H1 (cell line): ENCODE measurements at regions of chr22 and their contacts with region 1.

Region 1: DNA sequence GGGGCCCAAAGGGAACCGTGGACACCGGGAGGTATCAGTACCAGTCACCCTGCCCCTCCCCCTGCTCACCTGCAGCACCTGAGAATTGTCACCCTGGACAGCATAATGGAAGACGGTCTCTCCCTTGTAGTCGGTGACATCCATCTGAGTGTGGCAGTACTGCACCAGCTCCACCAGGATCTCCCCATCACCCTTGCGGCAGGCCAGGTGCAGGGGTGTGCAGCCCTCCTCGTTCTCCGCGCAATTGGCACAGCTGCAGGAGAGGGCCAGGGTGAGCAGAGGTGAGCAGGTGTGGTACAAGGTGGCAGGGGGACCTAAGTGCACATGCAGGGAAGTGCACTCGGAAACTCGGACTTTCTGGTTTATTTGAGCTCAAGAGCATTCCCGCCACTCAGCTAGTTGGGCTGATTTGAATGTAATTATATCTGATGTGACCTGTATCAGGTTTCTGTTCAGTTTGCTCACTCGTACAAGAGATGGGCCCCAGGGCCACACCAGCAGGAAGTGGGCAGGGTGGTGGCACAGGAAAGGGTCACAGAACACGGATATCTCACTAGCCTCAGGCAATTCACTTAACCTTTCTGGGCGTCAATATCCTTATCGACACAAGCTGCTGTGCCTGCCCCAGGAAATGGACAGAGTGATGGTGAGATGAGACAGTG is 32.7 kb upstream of the BAIAP2L2 start:
- DNase-seq: no peak
- H3K4me3 ChIP-seq: no peak overlapping the region
- H3K27ac ChIP-seq: no peak overlapping the region
- H3K4me1 ChIP-seq: peaks cover 0 to 3% (median 0%) of the 10 kb centered on the region in 4 experiments; a peak in 3 of 7 replicates
- H3K27me3 ChIP-seq: no peaks in the 10 kb centered on the region
- CTCF ChIP-seq: no peak
- EP300 ChIP-seq: no peak
- POLR2A ChIP-seq: no peak
- RAD21 ChIP-seq: no peak

Region 2: GRCh38 chr22:38109371-38110001 is 33.7 kb before region 1 on chr22:
- CTCF ChIA-PET with region 1: interaction called, 64 read pairs
- POLR2A ChIA-PET with region 1: no interaction called
- DNase-seq: no peak
- H3K4me3 ChIP-seq: no peak overlapping the region
- H3K27ac ChIP-seq: no peak overlapping the region
- H3K4me1 ChIP-seq: peaks cover 0 to 9% (median 7%) of the 10 kb centered on the region in 4 experiments; a peak in 3 of 7 replicates
- H3K27me3 ChIP-seq: no peaks in the 10 kb centered on the region
- CTCF ChIP-seq: no peak
- EP300 ChIP-seq: no peak
- POLR2A ChIP-seq: no peak
- RAD21 ChIP-seq: no peak